Astrocyte of the cerebellum (primary cell): ENCODE measurements at regions of chr17 and their contacts with region 1.

Region 1: GRCh38 chr17:17663160-17664063 is 17.8 kb upstream of the RAI1 start:
- DNase-seq: peak; percentile 91
- H3K4me3 ChIP-seq: no peak overlapping the region
- CTCF ChIP-seq: no peak

Region 2: DNA sequence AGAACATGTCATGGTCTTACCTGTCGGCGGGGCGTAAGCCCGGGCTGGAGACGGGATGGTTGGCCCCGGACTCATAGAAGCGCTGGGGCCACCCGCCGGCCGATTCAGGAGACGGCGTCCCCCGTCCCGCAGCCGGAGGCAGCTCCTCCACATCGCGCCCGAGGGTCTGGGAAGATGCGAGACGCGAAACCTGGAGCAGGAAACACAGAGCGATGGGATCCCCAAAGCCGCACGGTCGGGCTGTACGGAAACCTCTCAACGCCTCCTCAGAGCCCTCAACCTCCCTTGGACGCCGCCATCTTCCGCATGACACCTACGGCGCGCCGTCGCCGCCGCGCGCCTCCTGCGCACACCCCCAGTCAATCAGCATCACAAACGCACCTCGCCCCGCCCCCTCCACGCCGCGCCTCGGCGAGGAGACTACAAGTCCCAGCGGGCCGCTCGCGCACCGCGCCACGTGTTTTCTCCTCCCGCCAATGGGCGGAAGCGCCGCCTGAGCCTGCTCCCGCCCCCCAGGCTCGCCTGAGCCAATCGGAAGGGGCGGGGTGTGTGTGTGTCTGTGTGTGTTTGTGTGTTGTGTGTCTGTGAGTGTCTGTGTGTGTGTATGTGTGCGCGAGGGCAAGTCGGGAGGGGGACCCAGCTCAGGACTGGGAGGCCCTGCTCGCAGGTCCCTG is 375.6 kb after region 1 on chr17 and contains the starts of genes ATPAF2 and GID4:
- in situ Hi-C with region 1: loop called (anchors 25 kb)
- DNase-seq: peak; percentile 96
- H3K4me3 ChIP-seq: peak within 1 kb of the TSS; percentile 73
- CTCF ChIP-seq: no peak